HEK293T (cell line): ENCODE measurements at regions of chr17 and their contacts with region 1.

Region 1: DNA sequence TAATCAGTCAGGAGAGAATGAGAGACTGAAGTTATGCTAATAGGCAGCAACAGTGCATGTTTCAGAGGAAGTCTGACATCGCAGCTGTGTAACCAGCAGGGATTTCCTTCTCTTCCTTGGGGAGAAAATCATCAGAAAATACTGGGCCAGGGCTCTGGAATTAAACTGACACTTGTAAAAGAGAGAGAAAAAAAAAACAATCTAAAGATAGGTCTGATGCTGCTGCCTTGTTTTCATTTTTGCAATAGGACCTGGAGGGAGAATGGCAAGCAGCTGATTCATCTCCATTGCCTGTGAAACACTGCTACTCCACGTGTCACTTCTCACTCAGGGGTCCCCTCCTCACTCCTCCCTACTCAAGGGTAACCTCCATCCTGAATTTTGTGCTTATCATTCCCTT is 17.7 kb upstream of the CORO6 start:
- DNase-seq: no peak

Region 2: DNA sequence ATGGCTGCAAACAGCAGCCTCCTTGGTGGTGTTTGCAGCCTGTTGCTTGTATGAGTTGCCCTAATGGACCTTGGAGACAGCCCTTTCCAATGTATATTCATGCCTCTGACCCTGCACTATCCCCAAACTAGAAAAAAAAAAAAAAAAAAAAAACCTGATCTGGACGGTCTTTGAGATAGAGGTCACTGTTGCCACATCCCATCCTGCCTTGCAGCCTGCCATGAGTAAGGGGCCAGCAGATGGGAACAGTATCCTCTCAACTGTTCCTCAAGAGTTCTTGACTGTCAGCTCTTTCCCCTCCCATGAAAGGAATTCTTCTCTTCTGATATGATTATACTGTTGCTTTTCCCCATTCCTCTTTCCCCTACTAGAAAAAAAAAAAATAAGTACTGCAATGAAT is 137.2 kb after region 1 on chr17:
- CTCF ChIA-PET with region 1: interaction called, 51 read pairs
- POLR2A ChIA-PET with region 1: no interaction called
- DNase-seq: no peak